Activated T-helper 1 cell treated with anti-CD3 and anti-CD28 coated beads, Interleukin-12 subunit alpha, Interleukin-12 subunit beta, Interleukin-2, Interleukin-4 antibody, amounts not matched to agents 30 ng/mL and 10 ng/mL and 1 ng/mL, durations not matched to agents 14 hours and 24 hours and 36 hours (primary cell): ENCODE measurements at regions of chr6 and their contacts with region 1.

Region 1: DNA sequence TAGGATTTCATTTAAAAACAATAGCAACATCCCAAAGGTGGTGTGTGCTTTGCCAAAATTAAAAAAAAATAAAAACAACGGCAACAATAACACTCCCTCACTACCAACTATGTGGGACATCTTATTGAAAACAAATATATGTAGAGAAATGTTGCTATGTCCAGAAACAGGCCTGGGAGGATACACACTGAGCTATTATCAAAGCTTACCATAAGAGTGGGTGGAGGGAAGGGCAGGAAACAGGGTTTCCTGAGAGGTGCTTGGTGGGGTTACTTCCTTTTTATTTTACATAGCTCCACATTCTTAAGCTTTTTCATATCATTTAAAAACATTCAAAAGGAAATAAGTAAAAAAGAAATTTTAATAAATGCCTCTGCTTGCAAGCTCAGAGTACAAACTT is 150.0 kb upstream of the RIPOR2 start:
- DNase-seq: no peak
- H3K4me3 Mint-ChIP-seq: no peak overlapping the region
- H3K27ac Mint-ChIP-seq: peak overlapping the region; percentile 67
- H3K4me1 Mint-ChIP-seq: peaks cover 10% of the 10 kb centered on the region
- H3K27me3 Mint-ChIP-seq: no peaks in the 10 kb centered on the region

Region 2: GRCh38 chr6:25112207-25112874 is 26.6 kb after region 1 on chr6:
- intact Hi-C with region 1: no loop called
- DNase-seq: no peak
- H3K4me3 Mint-ChIP-seq: no peak overlapping the region
- H3K27ac Mint-ChIP-seq: no peak overlapping the region
- H3K4me1 Mint-ChIP-seq: peaks cover 50% of the 10 kb centered on the region
- H3K27me3 Mint-ChIP-seq: no peaks in the 10 kb centered on the region

Region 3: GRCh38 chr6:25127076-25127837 is 41.5 kb after region 1 on chr6:
- intact Hi-C with region 1: loop called (anchors 5 kb)
- DNase-seq: no peak
- H3K4me3 Mint-ChIP-seq: peak overlapping the region; percentile 0
- H3K27ac Mint-ChIP-seq: peak overlapping the region; percentile 35
- H3K4me1 Mint-ChIP-seq: peaks cover 72% of the 10 kb centered on the region
- H3K27me3 Mint-ChIP-seq: no peaks in the 10 kb centered on the region